SK-N-SH (cell line): ENCODE measurements at regions of chr14 and their contacts with region 1.

Region 1: GRCh38 chr14:22556990-22557623 is 31.9 kb downstream of the DAD1 start:
- DNase-seq: peak; percentile 94
- H3K4me3 ChIP-seq: peak overlapping the region; percentile 35 to 67
- H3K27ac ChIP-seq: no peak overlapping the region; a peak in 1 of 4 replicates
- H3K4me1 ChIP-seq: peaks cover 3 to 10% of the 10 kb centered on the region in 2 experiments; a peak in 3 of 4 replicates
- H3K27me3 ChIP-seq: no peaks in the 10 kb centered on the region
- CTCF ChIP-seq: peak; percentile 100
- EP300 ChIP-seq: no peak
- RAD21 ChIP-seq: peak; percentile 80

Region 2: GRCh38 chr14:22386924-22387775 is 170.0 kb before region 1 on chr14:
- CTCF ChIA-PET with region 1: interaction called, 19 read pairs
- POLR2A ChIA-PET with region 1: no interaction called
- DNase-seq: peak; percentile 73
- H3K4me3 ChIP-seq: no peak overlapping the region; a peak in 1 of 4 replicates
- H3K27ac ChIP-seq: no peak overlapping the region
- H3K4me1 ChIP-seq: no peaks in the 10 kb centered on the region; a peak in 2 of 4 replicates
- H3K27me3 ChIP-seq: peaks cover 51% of the 10 kb centered on the region
- CTCF ChIP-seq: peak; percentile 88
- EP300 ChIP-seq: no peak
- RAD21 ChIP-seq: peak; percentile 91

Region 3: DNA sequence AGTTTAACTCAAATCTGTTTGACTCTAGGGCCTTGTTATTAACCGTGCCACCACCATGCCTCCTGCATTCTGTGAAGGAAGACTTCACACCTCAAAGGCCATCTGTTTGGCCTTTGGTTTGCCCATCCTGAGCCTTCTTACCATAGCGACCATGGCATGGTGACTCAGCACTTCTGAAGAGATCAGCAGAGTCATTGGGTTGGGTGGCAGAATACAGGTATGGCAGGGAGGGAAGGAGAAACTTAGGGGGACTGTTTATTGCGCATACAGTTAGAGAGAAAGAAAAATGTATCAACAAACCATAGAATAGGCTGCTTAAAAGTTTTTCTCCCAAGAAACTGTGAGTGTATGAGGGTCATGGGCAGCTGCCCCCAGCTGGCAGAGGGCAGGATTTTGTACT is 17.3 kb before region 1 on chr14:
- CTCF ChIA-PET with region 1: interaction called, 44 read pairs
- POLR2A ChIA-PET with region 1: no interaction called
- DNase-seq: no peak
- H3K4me3 ChIP-seq: no peak overlapping the region
- H3K27ac ChIP-seq: peak overlapping the region in 1 of 2 experiments; percentile 42; a peak in 1 of 4 replicates
- H3K4me1 ChIP-seq: peaks cover 0 to 42% of the 10 kb centered on the region in 2 experiments
- H3K27me3 ChIP-seq: no peaks in the 10 kb centered on the region
- CTCF ChIP-seq: no peak
- EP300 ChIP-seq: no peak
- RAD21 ChIP-seq: no peak

Region 4: GRCh38 chr14:22570132-22570949 is 13.2 kb after region 1 on chr14:
- CTCF ChIA-PET with region 1: interaction called, 116 read pairs
- POLR2A ChIA-PET with region 1: no interaction called
- DNase-seq: peak; percentile 71
- H3K4me3 ChIP-seq: peak overlapping the region in 1 of 2 experiments; percentile 1; a peak in 1 of 4 replicates
- H3K27ac ChIP-seq: peak overlapping the region; percentile 7 to 32; a peak in 1 of 4 replicates
- H3K4me1 ChIP-seq: peaks cover 0 to 18% of the 10 kb centered on the region in 2 experiments; a peak in 1 of 4 replicates
- H3K27me3 ChIP-seq: no peaks in the 10 kb centered on the region
- CTCF ChIP-seq: peak; percentile 89
- EP300 ChIP-seq: no peak
- RAD21 ChIP-seq: peak; percentile 87

Region 5: DNA sequence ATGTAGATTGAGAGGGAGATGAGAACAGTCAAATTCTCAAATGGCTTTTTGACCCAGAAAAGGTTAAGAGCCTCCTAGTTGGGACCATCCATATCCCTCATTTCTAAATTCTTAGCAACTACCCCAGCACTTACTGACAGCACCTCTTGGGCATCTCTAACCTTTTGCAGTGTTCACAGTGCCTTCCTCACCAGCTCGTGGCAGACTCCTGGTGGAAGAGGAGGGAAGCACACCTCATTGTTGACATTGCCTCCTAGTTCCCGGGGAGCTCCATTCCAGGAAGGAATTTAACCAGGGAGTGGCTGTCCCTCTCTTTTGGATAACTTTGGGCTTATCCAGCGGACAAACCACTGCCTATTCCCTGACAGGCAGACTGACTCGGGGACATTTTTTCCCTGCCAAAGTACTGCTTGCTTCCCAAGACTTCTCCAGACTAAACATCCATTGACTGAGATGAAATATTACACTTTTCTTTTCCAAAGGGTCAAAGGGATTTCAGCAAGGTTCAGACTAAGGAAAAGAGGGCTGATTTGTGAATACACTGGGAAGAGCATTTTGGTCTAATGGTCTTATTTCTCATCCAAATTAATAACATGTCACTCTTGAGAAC is 96.0 kb after region 1 on chr14:
- CTCF ChIA-PET with region 1: interaction called, 42 read pairs
- POLR2A ChIA-PET with region 1: no interaction called
- DNase-seq: peak; percentile 67
- H3K4me3 ChIP-seq: no peak overlapping the region; a peak in 1 of 4 replicates
- H3K27ac ChIP-seq: no peak overlapping the region
- H3K4me1 ChIP-seq: no peaks in the 10 kb centered on the region
- H3K27me3 ChIP-seq: peaks cover 21% of the 10 kb centered on the region; the same call in 1 of the 2 replicates
- CTCF ChIP-seq: peak; percentile 71
- EP300 ChIP-seq: no peak
- RAD21 ChIP-seq: peak; percentile 81

Region 6: DNA sequence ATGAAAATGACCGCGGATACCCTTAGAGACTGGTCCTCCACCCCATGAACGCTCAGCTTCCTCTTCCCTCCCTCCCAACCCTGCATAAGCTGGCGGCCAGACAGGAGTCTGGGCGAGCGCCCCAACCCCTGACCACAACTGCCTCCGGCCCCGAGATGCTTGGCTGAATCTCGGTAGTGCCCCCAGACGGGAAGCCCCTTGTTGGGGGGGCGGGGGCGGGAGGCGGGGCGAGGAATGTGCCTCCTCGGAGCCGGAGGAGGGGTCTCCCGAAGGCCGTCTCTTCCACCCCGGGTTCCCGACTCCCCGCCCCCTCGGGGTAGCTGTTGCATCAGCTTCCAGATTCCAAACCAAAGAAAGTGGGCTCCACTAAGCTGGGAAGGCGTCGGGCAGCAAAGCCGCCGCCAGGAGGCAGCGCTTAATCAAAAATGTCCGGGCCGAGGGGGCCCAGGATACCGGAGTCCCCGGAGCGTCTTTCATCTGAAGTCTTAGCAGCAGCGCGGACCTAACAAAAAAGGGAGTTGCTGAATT is 265.5 kb after region 1 on chr14:
- CTCF ChIA-PET with region 1: interaction called, 19 read pairs
- POLR2A ChIA-PET with region 1: no interaction called
- DNase-seq: peak; percentile 91
- H3K4me3 ChIP-seq: peak overlapping the region in 1 of 2 experiments; percentile 44; a peak in 1 of 4 replicates
- H3K27ac ChIP-seq: peak overlapping the region in 1 of 2 experiments; percentile 15; a peak in 1 of 4 replicates
- H3K4me1 ChIP-seq: peaks cover 8 to 13% of the 10 kb centered on the region in 2 experiments; a peak in 2 of 4 replicates
- H3K27me3 ChIP-seq: no peaks in the 10 kb centered on the region
- CTCF ChIP-seq: peak; percentile 84
- EP300 ChIP-seq: no peak
- RAD21 ChIP-seq: peak; percentile 95

Region 7: GRCh38 chr14:22865424-22866405 is 308.6 kb after region 1 on chr14:
- CTCF ChIA-PET with region 1: interaction called, 11 read pairs
- POLR2A ChIA-PET with region 1: no interaction called
- DNase-seq: peak; percentile 29
- H3K4me3 ChIP-seq: no peak overlapping the region
- H3K27ac ChIP-seq: no peak overlapping the region
- H3K4me1 ChIP-seq: peaks cover 3 to 5% of the 10 kb centered on the region in 2 experiments; a peak in 3 of 4 replicates
- H3K27me3 ChIP-seq: no peaks in the 10 kb centered on the region
- CTCF ChIP-seq: peak; percentile 40
- EP300 ChIP-seq: no peak
- RAD21 ChIP-seq: no peak